GM12878 (cell line): ENCODE measurements at regions of chr11 and their contacts with region 1.

Region 1: GRCh38 chr11:66408488-66409214 is 12.2 kb upstream of the NPAS4 start:
- DNase-seq: peak; percentile 36
- ATAC-seq: peak; percentile 93
- H3K4me3 ChIP-seq: no peak overlapping the region
- H3K27ac ChIP-seq: no peak overlapping the region
- H3K4me1 ChIP-seq: no peaks in the 10 kb centered on the region
- H3K27me3 ChIP-seq: peaks cover 0 to 8% of the 10 kb centered on the region in 2 experiments; a peak in 2 of 4 replicates
- CTCF ChIP-seq: peak; percentile 99 to 100 (median 99)
- EP300 ChIP-seq: no peak
- POLR2A ChIP-seq: no peak
- RAD21 ChIP-seq: peak; percentile 86

Region 2: DNA sequence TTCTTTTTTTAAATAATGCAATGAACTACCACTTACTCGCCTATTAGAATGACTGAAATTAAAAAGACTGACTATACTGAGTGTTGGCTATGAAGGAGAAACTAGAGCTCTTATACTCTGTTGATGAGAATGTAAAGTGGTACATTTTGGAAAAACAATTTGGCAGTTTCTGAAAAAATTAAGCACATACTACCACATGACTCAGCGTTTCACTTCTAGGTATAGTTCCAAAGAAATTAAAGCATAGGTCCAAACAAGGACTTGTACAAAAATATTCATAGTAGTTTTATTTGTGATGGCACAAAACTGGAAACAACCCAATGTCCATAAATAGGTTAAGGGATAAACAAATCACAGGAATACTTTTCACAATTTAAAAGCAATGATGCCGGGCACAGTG is 14.7 kb before region 1 on chr11:
- CTCF ChIA-PET with region 1: interaction called, 13 read pairs
- POLR2A ChIA-PET with region 1: no interaction called
- RAD21 ChIA-PET with region 1: no interaction called
- SMC1A ChIA-PET with region 1: interaction called, 4 read pairs
- in situ Hi-C with region 1: no loop called
- intact Hi-C with region 1: no loop called
- DNase-seq: no peak
- ATAC-seq: no peak
- H3K4me3 ChIP-seq: no peak overlapping the region
- H3K27ac ChIP-seq: no peak overlapping the region
- H3K4me1 ChIP-seq: no peaks in the 10 kb centered on the region
- H3K27me3 ChIP-seq: no peaks in the 10 kb centered on the region
- CTCF ChIP-seq: no peak
- EP300 ChIP-seq: no peak
- POLR2A ChIP-seq: no peak
- RAD21 ChIP-seq: no peak

Region 3: DNA sequence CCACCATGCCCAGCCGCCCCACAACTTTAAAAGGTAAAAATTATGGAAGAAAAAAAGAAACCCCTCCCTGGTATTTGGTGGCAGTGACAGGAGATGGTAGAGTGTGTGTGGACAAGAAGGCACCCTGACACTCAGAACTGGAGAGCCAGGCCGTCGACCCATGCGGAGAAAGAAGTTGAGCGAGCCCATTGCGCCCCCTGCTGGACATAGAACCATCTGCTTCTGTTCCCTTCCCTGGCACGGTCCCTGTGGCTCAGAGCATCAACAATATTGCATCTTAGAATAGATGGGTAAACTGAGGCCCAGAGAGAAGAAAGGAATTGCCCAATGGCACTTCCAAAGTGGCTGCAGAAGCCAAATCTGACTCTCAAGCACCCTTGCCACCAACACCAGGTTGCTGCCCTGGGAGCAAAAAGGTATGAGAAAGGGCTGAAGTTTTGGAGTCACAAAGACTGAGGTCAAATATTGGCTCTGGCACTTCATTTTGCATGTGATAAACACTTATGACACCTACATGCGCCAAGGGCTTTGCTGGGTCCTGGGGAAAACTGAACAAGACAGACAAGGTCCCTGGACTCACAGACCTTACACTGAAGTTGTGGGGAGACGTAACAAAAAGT is 21.4 kb after region 1 on chr11:
- CTCF ChIA-PET with region 1: interaction called, 27 read pairs
- POLR2A ChIA-PET with region 1: no interaction called
- RAD21 ChIA-PET with region 1: interaction called, 3 read pairs
- SMC1A ChIA-PET with region 1: interaction called, 3 read pairs
- in situ Hi-C with region 1: no loop called
- intact Hi-C with region 1: loop called (anchors 1 kb)
- DNase-seq: no peak
- ATAC-seq: peak; percentile 93
- H3K4me3 ChIP-seq: no peak overlapping the region
- H3K27ac ChIP-seq: no peak overlapping the region
- H3K4me1 ChIP-seq: no peaks in the 10 kb centered on the region
- H3K27me3 ChIP-seq: no peaks in the 10 kb centered on the region
- CTCF ChIP-seq: peak; percentile 78 to 88 (median 79)
- EP300 ChIP-seq: no peak
- POLR2A ChIP-seq: no peak
- RAD21 ChIP-seq: peak; percentile 68

Region 4: DNA sequence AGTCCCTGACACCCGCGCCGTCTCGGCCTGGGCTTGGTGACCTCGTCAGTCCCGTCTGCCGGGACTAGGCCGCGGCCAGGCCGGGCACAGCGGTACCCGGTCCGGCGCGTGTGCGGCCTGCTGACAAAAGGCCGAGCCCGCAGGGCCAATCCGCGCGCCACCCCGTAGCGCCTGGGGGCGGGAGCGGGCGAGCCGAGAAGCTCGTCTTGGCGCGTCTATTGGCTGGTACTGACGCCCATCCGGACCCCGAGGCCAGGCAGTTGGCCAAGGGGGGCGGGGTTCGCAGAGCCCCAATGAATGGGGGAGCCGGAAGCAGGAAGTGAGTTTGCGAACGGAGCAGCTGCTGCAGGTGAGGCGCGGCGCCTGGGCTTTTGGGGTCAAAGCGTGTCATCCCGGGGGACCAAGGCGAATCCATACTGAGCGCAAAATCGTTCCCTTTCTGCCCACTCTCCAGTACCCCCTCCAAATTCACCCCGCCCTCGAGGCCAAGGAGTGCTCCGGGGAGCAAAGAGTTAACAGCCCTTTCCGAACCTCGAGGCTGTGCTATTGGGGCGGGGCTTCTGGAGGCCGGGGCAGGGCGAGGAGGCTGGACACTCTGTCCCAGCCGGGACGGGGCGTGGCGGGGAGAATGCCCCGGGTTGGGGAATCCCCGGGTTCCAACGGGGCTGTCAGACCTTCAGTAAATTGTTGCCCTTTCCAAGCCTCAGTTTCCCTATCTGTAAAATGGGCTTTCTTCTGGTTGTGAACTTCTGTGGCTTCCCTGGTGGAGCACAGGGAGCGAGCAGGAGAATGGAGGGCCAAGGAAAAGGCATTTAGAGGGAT is 71.7 kb after region 1 on chr11 and contains the start of gene DPP3:
- CTCF ChIA-PET with region 1: interaction called, 41 read pairs
- POLR2A ChIA-PET with region 1: no interaction called
- RAD21 ChIA-PET with region 1: interaction called, 6 read pairs
- SMC1A ChIA-PET with region 1: interaction called, 8 read pairs
- in situ Hi-C with region 1: no loop called
- intact Hi-C with region 1: loop called (anchors 1 kb)
- DNase-seq: peak; percentile 84
- ATAC-seq: peak; percentile 98
- H3K4me3 ChIP-seq: peak within 1 kb of the TSS; percentile 95
- H3K27ac ChIP-seq: peak within 1 kb of the TSS; percentile 89
- H3K4me1 ChIP-seq: peaks cover 6% of the 10 kb centered on the region
- H3K27me3 ChIP-seq: no peaks in the 10 kb centered on the region
- CTCF ChIP-seq: no peak
- EP300 ChIP-seq: peak in 1 of 2 experiments; percentile 40; a peak in 1 of 4 replicates
- POLR2A ChIP-seq: peak; percentile 94
- RAD21 ChIP-seq: no peak
- polyA plus RNA-seq, gene DPP3: 6.0 to 6.3 TPM

Region 5: DNA sequence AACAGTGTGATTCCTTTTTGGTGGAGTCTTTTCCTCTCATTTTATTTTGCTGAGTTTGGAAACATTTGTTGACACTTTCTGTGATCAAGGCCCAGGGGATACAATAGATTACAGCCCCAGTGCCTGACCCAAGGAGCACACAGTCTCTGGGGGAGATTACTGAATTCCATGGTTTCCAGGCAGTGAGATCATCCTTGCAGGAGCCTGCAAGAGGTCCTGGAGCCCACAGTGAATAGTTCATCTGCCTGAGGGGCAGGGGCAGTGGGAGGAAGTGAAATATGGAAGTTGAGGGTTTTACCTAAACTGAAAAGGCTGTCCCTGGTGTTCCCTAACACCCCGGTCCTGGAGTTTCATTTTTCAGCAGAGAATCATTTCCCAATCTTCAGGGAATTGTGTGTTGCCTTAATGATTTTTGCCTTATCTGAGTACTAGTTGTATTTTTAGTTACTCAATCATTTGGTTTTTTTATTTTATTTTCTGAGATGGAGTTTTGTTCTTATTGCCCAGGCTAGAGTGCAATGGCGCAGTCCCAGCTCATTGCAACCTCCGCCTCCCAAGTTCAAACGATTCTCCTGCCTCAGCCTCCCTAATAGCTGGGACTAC is 192.1 kb after region 1 on chr11:
- CTCF ChIA-PET with region 1: no interaction called
- POLR2A ChIA-PET with region 1: no interaction called
- RAD21 ChIA-PET with region 1: no interaction called
- SMC1A ChIA-PET with region 1: no interaction called
- in situ Hi-C with region 1: no loop called
- intact Hi-C with region 1: no loop called
- DNase-seq: no peak
- ATAC-seq: no peak
- H3K4me3 ChIP-seq: no peak overlapping the region
- H3K27ac ChIP-seq: no peak overlapping the region
- H3K4me1 ChIP-seq: peaks cover 7% of the 10 kb centered on the region; the same call in 1 of the 2 replicates
- H3K27me3 ChIP-seq: no peaks in the 10 kb centered on the region
- CTCF ChIP-seq: no peak
- EP300 ChIP-seq: no peak
- POLR2A ChIP-seq: no peak
- RAD21 ChIP-seq: no peak

Region 6: DNA sequence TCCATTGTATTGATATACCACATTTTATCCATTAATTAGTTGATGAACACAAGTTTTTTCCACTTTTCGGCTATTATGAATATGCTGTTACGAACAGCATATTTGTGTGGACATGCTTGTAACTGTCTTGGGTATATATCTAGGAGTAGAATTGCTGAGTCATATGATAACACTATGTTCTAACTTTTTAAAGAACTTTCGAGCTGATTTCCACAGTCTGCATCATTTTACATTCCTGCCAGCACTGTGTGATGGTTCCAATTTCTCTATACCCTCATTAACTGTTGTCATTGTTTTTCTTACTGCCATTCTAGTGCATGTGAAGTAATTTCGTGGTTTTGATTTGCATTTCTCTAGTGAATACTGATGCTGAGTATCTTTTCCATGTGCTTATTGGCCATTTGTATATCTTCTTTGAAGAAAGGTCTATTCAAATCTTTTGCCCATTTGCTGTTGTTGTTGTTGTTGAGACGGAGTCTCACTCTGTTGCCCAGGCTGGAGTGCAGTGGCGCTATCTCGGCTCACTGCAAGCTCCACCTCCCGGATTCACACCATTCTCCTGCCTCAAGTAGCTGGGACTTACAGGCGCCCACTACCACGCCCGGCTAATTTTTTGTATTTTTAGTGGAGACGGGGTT is 427.2 kb after region 1 on chr11:
- CTCF ChIA-PET with region 1: interaction called, 3 read pairs
- POLR2A ChIA-PET with region 1: no interaction called
- RAD21 ChIA-PET with region 1: no interaction called
- SMC1A ChIA-PET with region 1: no interaction called
- in situ Hi-C with region 1: loop called (anchors 5 kb)
- intact Hi-C with region 1: loop called (anchors 2 kb)
- DNase-seq: no peak
- ATAC-seq: no peak
- H3K4me3 ChIP-seq: no peak overlapping the region
- H3K27ac ChIP-seq: no peak overlapping the region
- H3K4me1 ChIP-seq: no peaks in the 10 kb centered on the region
- H3K27me3 ChIP-seq: no peaks in the 10 kb centered on the region
- CTCF ChIP-seq: no peak
- EP300 ChIP-seq: no peak
- POLR2A ChIP-seq: no peak
- RAD21 ChIP-seq: no peak